ENCODE measurements at regions of chr1 and their contacts with region 1.

Region 1: GRCh38 chr1:31938174-31938950 is at the start of gene PTP4A2:
- DNase-seq: peak; percentile 97
- ATAC-seq: peak; percentile 76
- H3K4me3 ChIP-seq: peak within 1 kb of the TSS; percentile 84
- H3K27ac ChIP-seq: peak within 1 kb of the TSS; percentile 93
- H3K4me1 ChIP-seq: peaks cover 33% of the 10 kb centered on the region
- H3K27me3 ChIP-seq: no peaks in the 10 kb centered on the region
- CTCF ChIP-seq: peak; percentile 37 to 72 (median 56); a peak in 5 of 6 replicates
- EP300 ChIP-seq: peak; percentile 37 to 61
- POLR2A ChIP-seq: peak; percentile 73
- RAD21 ChIP-seq: no peak
- polyA plus RNA-seq, gene PTP4A2: 268 to 424 TPM

Region 2: DNA sequence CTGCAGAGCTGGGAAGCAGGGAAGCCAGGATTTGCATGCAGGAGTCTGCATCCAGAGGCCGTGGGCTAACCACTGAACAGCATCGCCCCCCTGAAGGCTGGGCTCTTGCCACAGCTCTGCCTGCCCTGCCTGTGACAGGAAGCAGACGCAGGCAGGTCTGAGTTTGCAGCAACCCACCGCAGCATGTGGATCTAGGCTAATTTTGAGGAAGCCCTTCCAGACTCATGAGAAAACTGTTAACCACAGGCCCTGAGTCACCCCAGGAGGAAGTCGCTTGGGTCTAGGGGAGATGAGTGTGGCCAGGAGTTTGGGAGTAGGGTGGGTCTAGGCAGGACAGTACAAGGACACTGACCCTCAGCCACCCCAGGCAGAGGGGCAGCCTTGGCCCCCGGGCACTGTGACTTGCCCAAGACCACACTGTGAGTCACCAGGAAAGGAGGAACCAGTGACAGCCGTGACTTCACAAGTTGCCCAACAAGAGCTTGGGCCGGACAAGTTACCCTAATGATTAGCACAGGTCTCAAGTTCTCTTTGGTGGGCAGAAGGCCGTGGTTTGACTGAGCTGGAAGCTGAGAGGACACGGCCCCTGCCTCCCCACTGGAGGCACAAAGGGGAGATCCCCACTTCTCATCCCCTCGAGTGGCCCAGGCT is 1181.7 kb before region 1 on chr1:
- CTCF ChIA-PET with region 1: no interaction called
- POLR2A ChIA-PET with region 1: no interaction called
- RAD21 ChIA-PET with region 1: no interaction called
- SMC1A ChIA-PET with region 1: no interaction called
- in situ Hi-C with region 1: loop called (anchors 10 kb)
- intact Hi-C with region 1: no loop called
- DNase-seq: no peak
- ATAC-seq: peak; percentile 16
- H3K4me3 ChIP-seq: peak overlapping the region; percentile 98
- H3K27ac ChIP-seq: peak overlapping the region; percentile 93
- H3K4me1 ChIP-seq: peaks cover 48% of the 10 kb centered on the region
- H3K27me3 ChIP-seq: no peaks in the 10 kb centered on the region
- CTCF ChIP-seq: no peak
- EP300 ChIP-seq: peak in 1 of 2 experiments; percentile 59; a peak in 1 of 4 replicates
- POLR2A ChIP-seq: no peak; the same call in 1 of the 2 replicates
- RAD21 ChIP-seq: no peak

Region 3: GRCh38 chr1:31593770-31594632 is 344.4 kb before region 1 on chr1:
- CTCF ChIA-PET with region 1: no interaction called
- POLR2A ChIA-PET with region 1: no interaction called
- RAD21 ChIA-PET with region 1: no interaction called
- SMC1A ChIA-PET with region 1: no interaction called
- in situ Hi-C with region 1: no loop called
- intact Hi-C with region 1: no loop called
- DNase-seq: peak; percentile 26
- ATAC-seq: peak; percentile 100
- H3K4me3 ChIP-seq: no peak overlapping the region
- H3K27ac ChIP-seq: no peak overlapping the region
- H3K4me1 ChIP-seq: no peaks in the 10 kb centered on the region; the same call in 1 of the 2 replicates
- H3K27me3 ChIP-seq: no peaks in the 10 kb centered on the region
- CTCF ChIP-seq: peak; percentile 90 to 97 (median 97)
- EP300 ChIP-seq: no peak
- POLR2A ChIP-seq: no peak
- RAD21 ChIP-seq: peak; percentile 67

Region 4: DNA sequence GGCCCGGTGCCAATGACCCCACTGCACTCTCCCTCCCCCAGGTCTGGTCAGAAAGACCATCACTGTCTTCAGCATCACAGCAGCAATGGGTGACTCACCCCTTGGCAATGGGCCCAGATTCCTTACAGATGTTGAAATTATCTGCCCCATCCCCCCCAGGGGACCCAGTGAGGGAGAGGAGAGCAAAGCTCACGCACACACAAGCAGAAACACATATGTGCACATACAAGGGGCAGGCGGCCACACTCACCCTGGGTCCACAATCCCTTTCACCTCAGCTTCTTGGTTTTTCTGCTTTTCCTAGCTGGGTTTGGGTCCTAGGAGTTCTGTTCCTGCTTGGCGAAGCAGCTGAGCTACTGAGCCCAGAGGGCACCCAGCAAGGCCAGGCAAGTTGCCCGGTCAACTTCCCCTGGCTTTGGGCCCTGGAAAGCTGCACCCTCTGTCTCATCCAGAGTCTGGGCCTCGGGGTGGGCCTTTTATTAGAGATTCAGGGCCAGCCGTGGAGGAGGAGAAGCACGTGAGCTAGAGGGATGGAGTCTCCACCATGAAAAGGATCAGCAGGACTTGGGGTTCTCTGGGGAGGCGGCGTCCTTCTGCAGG is 237.1 kb before region 1 on chr1:
- CTCF ChIA-PET with region 1: no interaction called
- POLR2A ChIA-PET with region 1: no interaction called
- RAD21 ChIA-PET with region 1: no interaction called
- SMC1A ChIA-PET with region 1: no interaction called
- in situ Hi-C with region 1: no loop called
- intact Hi-C with region 1: no loop called
- DNase-seq: no peak
- ATAC-seq: no peak
- H3K4me3 ChIP-seq: no peak overlapping the region
- H3K27ac ChIP-seq: no peak overlapping the region
- H3K4me1 ChIP-seq: peaks cover 39% of the 10 kb centered on the region
- H3K27me3 ChIP-seq: no peaks in the 10 kb centered on the region
- CTCF ChIP-seq: no peak
- EP300 ChIP-seq: no peak
- POLR2A ChIP-seq: no peak
- RAD21 ChIP-seq: no peak

Region 5: GRCh38 chr1:31880890-31881687 is 57.3 kb before region 1 on chr1:
- CTCF ChIA-PET with region 1: interaction called, 4 read pairs
- POLR2A ChIA-PET with region 1: interaction called, 6 read pairs
- RAD21 ChIA-PET with region 1: interaction called, 11 read pairs
- SMC1A ChIA-PET with region 1: interaction called, 9 read pairs
- in situ Hi-C with region 1: no loop called
- intact Hi-C with region 1: no loop called
- DNase-seq: no peak
- ATAC-seq: peak; percentile 78
- H3K4me3 ChIP-seq: peak overlapping the region; percentile 39; the same call in 1 of the 2 replicates
- H3K27ac ChIP-seq: no peak overlapping the region
- H3K4me1 ChIP-seq: peaks cover 20% of the 10 kb centered on the region
- H3K27me3 ChIP-seq: no peaks in the 10 kb centered on the region
- CTCF ChIP-seq: no peak
- EP300 ChIP-seq: no peak
- POLR2A ChIP-seq: no peak
- RAD21 ChIP-seq: no peak

Region 6: GRCh38 chr1:31910933-31911332 is 27.4 kb before region 1 on chr1:
- CTCF ChIA-PET with region 1: interaction called, 9 read pairs
- POLR2A ChIA-PET with region 1: interaction called, 25 read pairs
- RAD21 ChIA-PET with region 1: interaction called, 15 read pairs
- SMC1A ChIA-PET with region 1: interaction called, 16 read pairs
- in situ Hi-C with region 1: no loop called
- intact Hi-C with region 1: no loop called
- DNase-seq: peak; percentile 64
- ATAC-seq: peak; percentile 72
- H3K4me3 ChIP-seq: no peak overlapping the region
- H3K27ac ChIP-seq: no peak overlapping the region
- H3K4me1 ChIP-seq: peaks cover 29% of the 10 kb centered on the region
- H3K27me3 ChIP-seq: no peaks in the 10 kb centered on the region
- CTCF ChIP-seq: no peak
- EP300 ChIP-seq: peak in 1 of 2 experiments; percentile 73; a peak in 2 of 4 replicates
- POLR2A ChIP-seq: no peak
- RAD21 ChIP-seq: no peak

Region 7: DNA sequence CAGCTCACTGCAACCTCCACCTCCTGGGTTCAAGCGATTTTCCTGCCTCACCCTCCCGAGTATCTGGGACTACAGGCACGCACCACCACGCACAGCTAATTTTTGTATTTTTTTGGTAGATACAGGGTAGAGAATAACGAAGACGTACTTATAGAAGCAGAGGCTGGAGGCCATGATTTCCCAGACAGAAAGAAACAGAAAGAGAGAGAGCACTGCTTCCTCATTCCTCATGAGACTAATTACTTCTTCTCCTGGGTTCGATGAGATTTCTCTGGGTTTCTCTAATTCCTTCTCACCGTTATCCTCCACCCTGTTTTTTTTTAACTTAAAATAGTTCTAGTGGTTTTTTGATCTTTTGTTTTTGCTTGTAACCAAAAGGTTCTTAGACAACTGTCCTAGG is 23.2 kb after region 1 on chr1:
- CTCF ChIA-PET with region 1: interaction called, 565 read pairs
- POLR2A ChIA-PET with region 1: interaction called, 153 read pairs
- RAD21 ChIA-PET with region 1: interaction called, 163 read pairs
- SMC1A ChIA-PET with region 1: interaction called, 315 read pairs
- in situ Hi-C with region 1: no loop called
- intact Hi-C with region 1: loop called (anchors 1 kb)
- DNase-seq: no peak
- ATAC-seq: peak; percentile 51
- H3K4me3 ChIP-seq: peak overlapping the region; percentile 42; the same call in 1 of the 2 replicates
- H3K27ac ChIP-seq: peak overlapping the region; percentile 96
- H3K4me1 ChIP-seq: peaks cover 70% of the 10 kb centered on the region
- H3K27me3 ChIP-seq: no peaks in the 10 kb centered on the region
- CTCF ChIP-seq: no peak
- EP300 ChIP-seq: no peak
- POLR2A ChIP-seq: no peak
- RAD21 ChIP-seq: no peak

Region 8: DNA sequence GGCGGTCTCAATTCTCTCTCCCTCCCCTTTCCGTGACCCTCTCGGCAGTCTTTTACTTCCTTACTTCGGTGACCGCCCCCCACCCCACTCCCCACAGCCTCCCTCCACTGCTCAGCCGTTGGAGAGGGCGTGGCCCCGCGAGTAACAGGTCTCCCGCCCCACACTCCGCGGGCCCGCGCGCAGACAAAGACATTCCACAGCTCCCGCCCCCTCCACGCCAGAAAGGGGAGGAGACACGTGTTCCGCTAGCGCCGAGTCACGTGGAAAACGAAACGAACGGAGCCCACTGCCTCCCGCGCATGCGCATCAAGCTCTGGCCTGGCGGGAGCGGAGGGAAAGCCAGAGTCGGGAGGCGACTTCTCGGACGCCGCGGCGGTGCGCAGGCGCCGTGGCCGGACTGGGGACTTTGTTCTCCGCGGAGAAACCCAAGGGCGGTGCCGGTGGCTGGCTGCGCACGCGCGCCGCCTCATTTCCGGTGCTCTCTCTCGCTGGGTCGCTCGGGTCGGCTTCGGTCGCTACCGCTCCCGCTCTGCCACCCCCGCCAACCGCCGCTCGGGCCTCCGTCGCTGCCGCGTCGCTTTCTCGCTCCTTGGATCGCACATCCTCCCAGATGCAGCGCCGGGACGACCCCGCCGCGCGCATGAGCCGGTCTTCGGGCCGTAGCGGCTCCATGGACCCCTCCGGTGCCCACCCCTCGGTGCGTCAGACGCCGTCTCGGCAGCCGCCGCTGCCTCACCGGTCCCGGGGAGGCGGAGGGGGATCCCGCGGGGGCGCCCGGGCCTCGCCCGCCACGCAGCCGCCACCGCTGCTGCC is 75.2 kb after region 1 on chr1 and contains the start of gene KHDRBS1:
- CTCF ChIA-PET with region 1: interaction called, 4 read pairs
- POLR2A ChIA-PET with region 1: interaction called, 19 read pairs
- RAD21 ChIA-PET with region 1: interaction called, 26 read pairs
- SMC1A ChIA-PET with region 1: interaction called, 3 read pairs
- in situ Hi-C with region 1: no loop called
- intact Hi-C with region 1: loop called (anchors 5 kb)
- DNase-seq: peak; percentile 98
- ATAC-seq: peak; percentile 87
- H3K4me3 ChIP-seq: peak within 1 kb of the TSS; percentile 99
- H3K27ac ChIP-seq: peak within 1 kb of the TSS; percentile 94
- H3K4me1 ChIP-seq: 0 out of 2 replicates have a peak, but pooled peaks cover 4% of the 10 kb centered on the region
- H3K27me3 ChIP-seq: no peaks in the 10 kb centered on the region
- CTCF ChIP-seq: no peak
- EP300 ChIP-seq: 0 out of 4 replicates have a peak, but pooled peaks of 1 of the 2 experiments have one; percentile 29
- POLR2A ChIP-seq: peak; percentile 95
- RAD21 ChIP-seq: no peak
- polyA plus RNA-seq, gene KHDRBS1: 42.5 to 97.6 TPM